RWPE1 (cell line): ENCODE measurements at regions of chr1 and their contacts with region 1.

Region 1: DNA sequence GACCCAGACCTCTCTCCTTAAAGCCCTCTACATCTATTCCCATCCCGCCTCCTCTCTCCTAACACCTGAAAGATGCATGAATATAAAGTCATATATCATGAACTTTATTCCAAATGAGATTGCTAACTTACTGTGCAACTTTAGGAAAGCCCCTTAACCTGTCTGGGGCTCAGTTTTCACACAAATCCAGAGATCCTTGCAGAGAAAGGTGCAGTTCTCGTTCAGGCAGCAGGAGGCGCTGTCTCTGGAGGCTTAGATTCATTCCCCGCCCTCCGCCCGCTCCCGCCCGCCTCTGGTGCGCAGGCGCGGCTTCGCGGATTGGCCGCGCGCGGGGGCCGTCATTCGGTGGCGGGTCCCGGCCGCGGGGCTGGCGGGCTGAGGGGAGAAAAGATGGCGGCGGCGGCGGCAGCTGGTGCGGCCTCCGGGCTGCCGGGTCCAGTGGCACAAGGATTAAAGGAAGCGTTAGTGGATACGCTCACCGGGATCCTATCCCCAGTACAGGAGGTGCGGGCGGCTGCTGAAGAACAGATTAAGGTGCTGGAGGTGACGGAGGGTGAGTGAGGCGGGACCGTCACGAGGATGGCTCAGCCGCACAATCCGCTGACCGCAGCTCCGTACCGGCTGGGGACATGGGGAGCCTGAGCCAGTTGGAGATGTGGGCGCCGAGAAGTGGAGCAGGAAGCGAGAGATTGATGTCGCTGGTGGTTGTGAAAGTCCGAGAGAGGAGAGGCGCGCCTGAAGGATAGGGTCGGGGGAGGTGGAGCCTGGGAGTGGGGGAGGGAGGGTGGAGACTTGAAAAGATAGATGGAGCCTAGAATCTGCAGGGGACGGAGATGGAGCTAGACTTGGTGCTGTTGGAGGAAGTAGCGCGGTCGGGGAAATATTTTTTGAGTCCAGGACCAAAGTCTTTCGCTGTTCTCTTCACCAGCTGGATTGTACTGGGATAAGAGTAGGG is at the start of gene IPO9:
- DNase-seq: peak; percentile 100
- H3K27ac ChIP-seq: peak within 1 kb of the TSS; percentile 85
- CTCF ChIP-seq: peak; percentile 98

Region 2: GRCh38 chr1:201841265-201841912 is 12.3 kb after region 1 on chr1:
- CTCF ChIA-PET with region 1: interaction called, 10 read pairs
- POLR2A ChIA-PET with region 1: no interaction called
- DNase-seq: no peak
- H3K27ac ChIP-seq: no peak overlapping the region
- CTCF ChIP-seq: no peak